PC-9 (cell line): ENCODE measurements at regions of chr1 and their contacts with region 1.

Region 1: DNA sequence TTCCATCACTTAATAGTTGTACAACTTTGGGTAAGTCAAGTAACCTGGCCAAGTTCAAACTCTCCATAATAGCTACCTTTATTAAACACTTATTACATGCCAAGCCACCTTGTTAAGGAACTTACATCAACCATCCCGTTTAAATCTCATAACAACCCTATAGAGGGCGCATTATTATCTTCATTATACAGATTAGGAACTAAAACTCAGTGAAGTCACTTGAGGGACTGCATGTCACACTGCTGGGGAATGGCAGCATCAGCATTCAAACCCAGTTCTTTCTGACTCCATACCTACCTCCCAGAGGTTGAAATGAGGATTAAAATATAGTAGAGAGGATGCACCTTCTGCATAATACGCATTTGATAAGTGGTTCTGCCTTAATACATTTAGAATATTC is 47.1 kb upstream of the PLA2G2C start:
- DNase-seq: peak in 1 of 2 experiments; percentile 64
- H3K4me3 ChIP-seq: peak overlapping the region; percentile 23; the same call in 1 of the 2 replicates
- H3K27ac ChIP-seq: peak overlapping the region; percentile 91
- H3K4me1 ChIP-seq: peaks cover 75% of the 10 kb centered on the region
- H3K27me3 ChIP-seq: no peaks in the 10 kb centered on the region
- CTCF ChIP-seq: peak; percentile 54

Region 2: DNA sequence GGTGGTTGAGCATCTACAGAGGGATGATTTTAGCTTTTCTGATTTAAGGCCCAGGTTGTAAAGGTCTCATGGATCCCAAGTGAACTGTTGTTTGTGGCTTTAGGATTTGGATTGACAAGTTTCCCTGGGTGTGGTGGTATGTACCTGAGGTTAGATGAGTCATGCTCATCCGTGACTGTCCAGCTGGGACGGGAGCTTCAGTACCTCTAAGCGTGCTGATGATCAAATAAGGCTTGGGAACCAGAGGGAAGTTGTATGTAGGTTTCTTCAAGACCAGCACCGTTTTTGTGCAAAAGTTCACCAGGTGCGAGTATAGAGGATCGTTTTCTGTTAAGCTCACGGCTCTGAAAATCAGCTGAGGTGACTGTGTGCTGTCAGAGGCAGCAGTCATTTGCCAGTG is 329.8 kb before region 1 on chr1:
- CTCF ChIA-PET with region 1: no interaction called
- POLR2A ChIA-PET with region 1: no interaction called
- intact Hi-C with region 1: no loop called
- DNase-seq: peak; percentile 59 to 91
- H3K4me3 ChIP-seq: no peak overlapping the region
- H3K27ac ChIP-seq: peak overlapping the region; percentile 82
- H3K4me1 ChIP-seq: peaks cover 20% of the 10 kb centered on the region
- H3K27me3 ChIP-seq: no peaks in the 10 kb centered on the region
- CTCF ChIP-seq: no peak

Region 3: GRCh38 chr1:20165522-20165951 is 67.9 kb before region 1 on chr1:
- CTCF ChIA-PET with region 1: no interaction called
- POLR2A ChIA-PET with region 1: no interaction called
- intact Hi-C with region 1: no loop called
- DNase-seq: no peak
- H3K4me3 ChIP-seq: no peak overlapping the region
- H3K27ac ChIP-seq: no peak overlapping the region
- H3K4me1 ChIP-seq: peaks cover under 1% of the 10 kb centered on the region; the same call in 1 of the 2 replicates
- H3K27me3 ChIP-seq: no peaks in the 10 kb centered on the region
- CTCF ChIP-seq: peak; percentile 64; the same call in 1 of the 2 replicates

Region 4: GRCh38 chr1:20361806-20362640 is 128.6 kb after region 1 on chr1:
- CTCF ChIA-PET with region 1: interaction called, 7 read pairs
- POLR2A ChIA-PET with region 1: no interaction called
- intact Hi-C with region 1: loop called (anchors 2 kb)
- DNase-seq: peak in 1 of 2 experiments; percentile 80
- H3K4me3 ChIP-seq: no peak overlapping the region
- H3K27ac ChIP-seq: no peak overlapping the region
- H3K4me1 ChIP-seq: peaks cover 41% of the 10 kb centered on the region
- H3K27me3 ChIP-seq: no peaks in the 10 kb centered on the region
- CTCF ChIP-seq: peak; percentile 90